ENCODE measurements at regions of chr3 and their contacts with region 1.

Region 1: GRCh38 chr3:141875374-141875892 is 1.0 kb upstream of the ATP1B3 start:
- DNase-seq: peak; percentile 87 to 89
- ATAC-seq: peak; percentile 83 to 97 (median 94)
- H3K4me3 ChIP-seq: peak overlapping the region; percentile 68 to 98 (median 94)
- H3K27ac ChIP-seq: peak overlapping the region; percentile 90 to 100 (median 99)
- H3K4me1 ChIP-seq: peaks cover 0 to 40% (median 21%) of the 10 kb centered on the region in 9 donors
- H3K27me3 ChIP-seq: no peaks in the 10 kb centered on the region
- CTCF ChIP-seq: peak; percentile 66 to 97 (median 90)

Region 2: DNA sequence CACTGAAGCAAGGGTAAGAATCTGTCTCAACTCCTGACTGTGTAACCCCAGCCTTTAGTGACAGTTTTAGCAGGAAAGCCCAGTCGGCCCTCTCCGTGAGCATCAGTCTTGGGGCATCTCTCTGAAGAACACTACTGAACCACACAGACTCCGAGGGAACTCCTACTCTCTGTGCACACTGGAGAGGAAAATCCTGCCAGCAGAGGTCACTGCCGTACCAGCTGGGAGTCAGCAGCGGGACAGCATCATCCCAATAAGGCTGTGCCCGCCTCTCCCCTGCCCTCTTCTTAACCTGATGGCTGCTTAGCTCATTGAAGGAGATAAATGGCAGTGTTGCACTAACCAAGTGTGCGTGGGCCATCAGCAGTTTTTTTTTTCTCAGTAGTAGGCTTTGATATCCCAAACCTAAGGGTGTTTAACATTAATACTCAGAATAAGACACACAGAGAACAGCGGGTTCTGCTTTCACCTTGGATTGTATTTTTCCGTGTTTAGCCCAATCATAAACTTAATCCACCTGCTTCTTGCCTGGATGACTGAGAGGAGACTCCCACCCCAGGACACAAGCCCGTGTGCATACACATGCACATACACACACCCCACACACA is 415.2 kb before region 1 on chr3:
- intact Hi-C with region 1: loop called in 1 of 10 experiments (anchors 5 kb)
- DNase-seq: peak; percentile 83 to 89
- ATAC-seq: peak; percentile 92 to 97 (median 96)
- H3K4me3 ChIP-seq: no peak overlapping the region
- H3K27ac ChIP-seq: no peak overlapping the region
- H3K4me1 ChIP-seq: peaks cover 0 to 12% (median 0%) of the 10 kb centered on the region in 9 donors
- H3K27me3 ChIP-seq: no peaks in the 10 kb centered on the region
- CTCF ChIP-seq: peak; percentile 77 to 95 (median 90)

Region 3: GRCh38 chr3:141738022-141738890 is 137.2 kb before region 1 on chr3 and contains the start of gene RNF7:
- intact Hi-C with region 1: loop called in 9 of 10 experiments (anchors 1 to 10 kb)
- DNase-seq: peak; percentile 92 to 96
- ATAC-seq: peak; percentile 97 to 100 (median 98)
- H3K4me3 ChIP-seq: peak within 1 kb of the TSS; percentile 78 to 99 (median 92)
- H3K27ac ChIP-seq: peak within 1 kb of the TSS; percentile 84 to 98 (median 95)
- H3K4me1 ChIP-seq: peaks cover 9 to 48% (median 36%) of the 10 kb centered on the region in 9 donors
- H3K27me3 ChIP-seq: no peaks in the 10 kb centered on the region
- CTCF ChIP-seq: peak; percentile 80 to 99 (median 94)
- total RNA-seq, gene RNF7: 77.2 to 95.8 (median 82.2) TPM

Region 4: GRCh38 chr3:141782454-141782853 is 93.0 kb before region 1 on chr3:
- intact Hi-C with region 1: loop called in 2 of 10 experiments (anchors 5 to 10 kb)
- DNase-seq: no peak
- ATAC-seq: peak in 1 of 8 donors; percentile 44
- H3K4me3 ChIP-seq: no peak overlapping the region
- H3K27ac ChIP-seq: no peak overlapping the region
- H3K4me1 ChIP-seq: no peaks in the 10 kb centered on the region
- H3K27me3 ChIP-seq: peaks cover 0 to 3% (median 0%) of the 10 kb centered on the region in 7 donors
- CTCF ChIP-seq: peak in 6 of 9 donors; percentile 27 to 48 (median 32)

Region 5: DNA sequence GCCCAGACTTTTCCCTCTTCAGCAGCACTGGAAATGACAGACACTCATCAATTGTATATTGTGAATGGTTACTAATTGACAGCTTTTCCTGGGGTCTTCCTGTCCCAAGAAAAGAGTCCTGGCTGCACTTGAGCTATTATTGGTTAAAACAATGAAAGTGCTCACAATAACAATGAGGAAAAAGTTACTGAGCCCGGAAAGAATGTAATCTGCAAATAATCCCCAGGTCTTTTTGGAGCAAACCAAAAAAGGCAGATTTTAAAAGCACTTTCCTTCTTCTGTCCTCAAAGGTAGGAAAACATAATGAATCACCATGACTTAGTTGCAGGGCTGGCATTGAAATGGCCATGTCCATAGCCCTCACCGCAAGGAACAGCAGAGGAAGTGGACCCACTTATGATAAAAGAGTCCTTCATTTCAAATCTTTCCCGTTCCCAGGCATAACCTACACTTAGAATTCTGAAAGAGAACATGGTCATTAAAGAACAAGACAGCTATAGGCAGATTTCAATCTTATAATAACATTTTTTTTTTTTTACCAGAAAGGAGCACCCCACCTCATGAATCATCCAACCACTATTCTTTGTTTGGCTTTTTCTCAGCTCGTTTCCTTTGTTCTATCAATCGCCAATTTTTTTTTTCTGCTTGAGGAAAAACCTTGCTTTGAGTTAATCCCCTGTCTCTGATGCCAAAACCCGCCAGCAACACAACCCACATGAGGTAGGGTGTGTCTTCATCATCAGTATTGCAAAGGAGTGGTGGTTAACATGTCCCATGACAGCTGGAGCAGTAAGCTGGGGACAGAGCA is 34.5 kb before region 1 on chr3:
- intact Hi-C with region 1: loop called in 1 of 10 experiments (anchors 1 kb)
- DNase-seq: no peak
- ATAC-seq: peak in 6 of 8 donors; percentile 34 to 82 (median 74)
- H3K4me3 ChIP-seq: no peak overlapping the region
- H3K27ac ChIP-seq: peak overlapping the region in 9 of 10 donors; percentile 3 to 84 (median 54)
- H3K4me1 ChIP-seq: peaks cover 0 to 11% (median 4%) of the 10 kb centered on the region in 9 donors
- H3K27me3 ChIP-seq: no peaks in the 10 kb centered on the region
- CTCF ChIP-seq: no peak